ENCODE measurements at regions of chr12 and their contacts with region 1.

Region 1: DNA sequence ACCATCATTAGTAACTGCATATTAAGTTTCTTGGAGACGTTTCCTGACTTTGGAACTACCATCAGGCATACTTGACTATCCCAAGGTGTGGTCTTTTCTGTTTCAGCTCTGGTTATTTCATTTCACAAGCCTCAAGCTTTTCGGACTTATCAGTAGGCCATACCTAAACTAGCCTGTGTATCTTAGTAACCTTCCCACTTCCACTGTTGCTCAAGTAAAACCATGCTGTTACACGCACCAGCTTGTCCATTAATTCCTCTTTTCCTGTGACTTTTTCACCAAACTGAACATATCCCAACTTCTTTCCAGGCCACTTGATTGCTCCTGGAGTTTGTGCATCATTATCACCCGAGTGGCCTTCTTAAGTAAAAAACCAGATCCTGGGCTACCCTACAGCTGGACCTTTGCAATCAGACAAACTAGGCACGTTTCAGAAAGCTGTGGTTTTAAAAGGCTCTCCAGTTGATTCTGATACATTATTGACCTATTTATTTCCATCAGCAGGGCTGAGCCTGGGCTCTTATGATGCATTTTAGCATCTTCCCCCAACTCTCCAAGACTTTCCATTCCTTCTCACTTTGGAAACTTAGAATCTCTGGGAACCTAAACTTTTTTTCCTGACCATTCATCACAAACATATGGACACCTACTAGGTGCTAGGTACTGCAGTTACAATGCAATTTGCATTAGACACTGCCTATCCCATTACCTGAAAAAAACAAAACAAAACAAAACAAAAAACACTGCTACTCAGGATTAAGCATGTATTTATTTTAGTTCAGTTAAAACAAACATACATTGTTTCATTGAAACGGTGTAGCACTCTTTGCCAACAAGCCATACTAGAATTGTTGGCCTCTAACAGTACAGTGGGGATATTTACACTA is 14.9 kb downstream of the SLC38A2 start:
- DNase-seq: no peak
- ATAC-seq: peak; percentile 76
- H3K4me3 ChIP-seq: no peak overlapping the region
- H3K27ac ChIP-seq: peak overlapping the region; percentile 48
- H3K4me1 ChIP-seq: peaks cover 54% of the 10 kb centered on the region
- H3K27me3 ChIP-seq: no peaks in the 10 kb centered on the region
- CTCF ChIP-seq: no peak

Region 2: DNA sequence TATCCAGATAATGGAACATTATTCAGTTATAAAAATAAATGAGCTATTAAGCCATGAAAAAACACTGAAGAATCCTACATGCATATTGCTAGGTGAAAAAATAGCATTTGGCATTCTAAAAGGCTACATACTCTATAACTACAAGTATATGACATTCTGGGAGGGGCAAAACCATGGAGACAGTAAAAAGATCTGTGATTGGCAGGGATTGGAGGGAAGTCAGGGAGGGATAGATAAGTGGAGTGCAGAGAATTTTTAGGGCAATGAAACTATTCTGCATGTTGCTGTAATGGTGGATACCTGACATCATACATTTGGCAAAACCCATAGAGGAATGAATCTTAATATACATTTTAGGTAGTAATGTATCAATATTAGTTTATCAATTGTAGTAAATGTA is 77.9 kb after region 1 on chr12:
- CTCF ChIA-PET with region 1: no interaction called
- POLR2A ChIA-PET with region 1: interaction called, 14 read pairs
- in situ Hi-C with region 1: no loop called
- intact Hi-C with region 1: no loop called
- DNase-seq: no peak
- ATAC-seq: no peak
- H3K4me3 ChIP-seq: no peak overlapping the region
- H3K27ac ChIP-seq: peak overlapping the region; percentile 99; the same call in 1 of the 2 replicates
- H3K4me1 ChIP-seq: peaks cover 69% of the 10 kb centered on the region
- H3K27me3 ChIP-seq: no peaks in the 10 kb centered on the region
- CTCF ChIP-seq: no peak

Region 3: DNA sequence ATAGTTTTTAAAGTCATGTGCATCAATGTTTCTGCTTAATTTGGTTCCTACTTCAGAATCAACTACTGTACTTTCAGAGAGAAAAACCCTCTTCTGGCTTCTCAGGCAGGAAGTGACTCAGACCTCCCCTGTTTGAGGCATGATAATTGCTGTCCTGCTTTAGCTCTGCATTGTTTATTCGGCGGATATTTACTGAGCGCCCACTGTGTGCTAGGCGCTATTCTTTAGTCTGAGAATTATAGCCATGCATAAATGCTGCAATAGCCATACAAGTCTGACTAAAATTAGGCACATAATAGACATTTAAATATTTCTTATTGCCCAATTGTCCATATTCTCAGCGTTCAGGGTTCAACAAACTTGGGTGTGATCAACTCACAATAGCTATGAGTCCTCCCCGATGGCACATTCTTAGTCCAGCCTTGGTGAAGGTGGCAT is 728.2 kb after region 1 on chr12:
- CTCF ChIA-PET with region 1: interaction called, 15 read pairs
- POLR2A ChIA-PET with region 1: no interaction called
- in situ Hi-C with region 1: no loop called
- intact Hi-C with region 1: no loop called
- DNase-seq: no peak
- ATAC-seq: peak; percentile 69
- H3K4me3 ChIP-seq: peak overlapping the region in 1 of 2 experiments; percentile 19; a peak in 2 of 4 replicates
- H3K27ac ChIP-seq: peak overlapping the region; percentile 86
- H3K4me1 ChIP-seq: peaks cover 77% of the 10 kb centered on the region
- H3K27me3 ChIP-seq: no peaks in the 10 kb centered on the region
- CTCF ChIP-seq: no peak

Measured in Panc1 (cell line).